AG04449 (cell line): ENCODE measurements at regions of chr2 and their contacts with region 1.

Region 1: GRCh38 chr2:8681786-8682692 is at the start of gene ID2:
- DNase-seq: peak; percentile 92
- H3K4me3 ChIP-seq: peak within 1 kb of the TSS; percentile 92
- CTCF ChIP-seq: no peak

Region 2: GRCh38 chr2:7203055-7203467 is 1479.0 kb before region 1 on chr2:
- CTCF ChIA-PET with region 1: interaction called, 5 read pairs
- POLR2A ChIA-PET with region 1: interaction called, 10 read pairs
- DNase-seq: peak; percentile 23
- H3K4me3 ChIP-seq: no peak overlapping the region
- CTCF ChIP-seq: peak; percentile 74

Region 3: DNA sequence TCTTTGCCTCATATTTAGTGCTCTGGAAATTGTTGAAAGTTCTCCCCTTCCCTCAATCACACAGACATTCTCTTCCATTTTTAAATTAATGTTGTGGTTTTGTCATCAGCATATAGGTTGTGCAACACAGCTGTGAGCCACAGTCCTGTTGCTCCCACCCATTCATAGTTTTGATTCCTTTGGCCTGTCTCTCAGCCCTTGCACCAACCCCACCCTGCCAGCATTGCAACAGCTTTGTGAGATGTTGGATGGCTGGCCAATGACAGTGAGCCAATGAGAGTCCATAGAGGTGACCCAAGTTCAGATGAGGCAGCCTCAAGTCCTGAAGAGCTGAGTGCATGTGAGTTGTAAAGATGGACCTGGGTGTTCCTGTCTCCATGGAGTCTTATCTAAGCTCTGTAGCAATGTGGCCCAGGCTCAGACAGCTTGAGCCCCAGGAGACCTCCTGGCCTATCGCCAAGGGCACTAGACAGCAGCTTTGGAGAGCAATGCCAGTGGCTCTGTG is 989.3 kb before region 1 on chr2:
- CTCF ChIA-PET with region 1: no interaction called
- POLR2A ChIA-PET with region 1: interaction called, 16 read pairs
- DNase-seq: peak; percentile 86
- H3K4me3 ChIP-seq: no peak overlapping the region
- CTCF ChIP-seq: no peak

Region 4: GRCh38 chr2:8456151-8456845 is 225.7 kb before region 1 on chr2:
- CTCF ChIA-PET with region 1: no interaction called
- POLR2A ChIA-PET with region 1: no interaction called
- DNase-seq: no peak
- H3K4me3 ChIP-seq: no peak overlapping the region
- CTCF ChIP-seq: no peak

Region 5: GRCh38 chr2:8544786-8545694 is 137.0 kb before region 1 on chr2:
- CTCF ChIA-PET with region 1: interaction called, 3 read pairs
- POLR2A ChIA-PET with region 1: interaction called, 45 read pairs
- DNase-seq: peak; percentile 65
- H3K4me3 ChIP-seq: no peak overlapping the region
- CTCF ChIP-seq: peak; percentile 73

Region 6: DNA sequence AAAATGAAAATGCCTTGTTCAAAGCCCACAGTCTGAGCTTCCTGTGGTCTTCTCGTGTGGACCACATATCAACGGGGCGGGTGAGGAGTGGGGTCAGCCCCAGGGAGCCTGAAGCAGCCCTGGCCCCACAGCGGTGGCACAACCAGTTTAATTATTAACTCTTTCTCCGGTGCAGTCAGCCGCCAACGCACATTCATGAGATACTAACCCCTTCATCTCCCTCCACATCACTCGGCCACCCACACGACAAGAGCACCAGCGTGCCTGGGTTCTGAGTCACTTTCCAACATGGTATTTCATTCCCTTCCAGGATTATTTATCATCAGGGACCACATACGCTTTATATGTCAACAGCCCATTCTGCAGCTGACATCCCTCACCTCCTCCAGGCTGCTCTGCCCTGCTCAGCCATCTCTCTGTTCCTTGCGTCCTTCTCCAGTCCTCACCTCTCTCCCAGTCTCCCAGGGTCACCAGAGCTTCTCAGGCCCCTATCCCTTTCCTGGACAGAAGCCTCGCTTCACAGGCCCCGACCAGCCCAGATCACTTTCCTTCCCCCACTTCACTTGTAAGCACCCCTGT is 48.2 kb before region 1 on chr2:
- CTCF ChIA-PET with region 1: no interaction called
- POLR2A ChIA-PET with region 1: interaction called, 29 read pairs
- DNase-seq: peak; percentile 72
- H3K4me3 ChIP-seq: peak overlapping the region; percentile 27
- CTCF ChIP-seq: no peak

Region 7: DNA sequence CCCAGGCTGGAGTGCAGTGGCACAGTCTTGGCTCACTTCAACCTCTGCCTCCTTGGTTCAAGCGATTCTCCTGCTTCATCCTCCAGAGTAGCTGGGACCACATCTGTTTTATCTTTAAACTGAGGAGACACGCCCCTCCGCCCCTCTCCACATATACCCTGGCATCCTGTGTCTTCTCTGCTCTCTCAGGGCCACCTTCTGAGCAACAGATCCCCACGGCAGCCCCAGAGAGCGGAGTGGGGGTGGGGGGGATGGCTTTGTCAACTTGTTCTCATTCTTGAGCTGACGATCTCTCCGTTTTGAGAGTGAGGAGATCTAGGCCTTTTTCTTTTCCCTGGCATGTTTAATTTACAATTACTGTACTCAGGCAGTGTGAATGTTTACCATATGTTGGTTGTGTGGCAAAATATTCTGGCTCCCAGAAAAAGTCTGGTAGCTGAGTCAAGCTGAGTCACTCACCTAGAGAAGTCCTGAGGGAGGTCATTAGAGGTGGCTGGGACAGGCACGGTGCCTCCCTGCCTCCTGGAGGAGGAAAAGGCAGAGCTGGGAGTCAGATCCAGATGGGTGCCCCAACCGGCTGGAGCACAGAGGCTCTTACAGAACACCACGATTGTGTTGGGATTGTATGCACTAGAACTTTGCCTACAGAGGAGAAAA is 19.7 kb before region 1 on chr2:
- CTCF ChIA-PET with region 1: no interaction called
- POLR2A ChIA-PET with region 1: interaction called, 12 read pairs
- DNase-seq: no peak
- H3K4me3 ChIP-seq: no peak overlapping the region
- CTCF ChIP-seq: peak; percentile 36

Region 8: GRCh38 chr2:8956774-8957173 is 274.7 kb after region 1 on chr2:
- CTCF ChIA-PET with region 1: no interaction called
- POLR2A ChIA-PET with region 1: no interaction called
- DNase-seq: no peak
- H3K4me3 ChIP-seq: no peak overlapping the region
- CTCF ChIP-seq: no peak